Left ventricle myocardium superior (tissue), 1 donor: ENCODE measurements at regions of chr10 and their contacts with region 1.

Region 1: DNA sequence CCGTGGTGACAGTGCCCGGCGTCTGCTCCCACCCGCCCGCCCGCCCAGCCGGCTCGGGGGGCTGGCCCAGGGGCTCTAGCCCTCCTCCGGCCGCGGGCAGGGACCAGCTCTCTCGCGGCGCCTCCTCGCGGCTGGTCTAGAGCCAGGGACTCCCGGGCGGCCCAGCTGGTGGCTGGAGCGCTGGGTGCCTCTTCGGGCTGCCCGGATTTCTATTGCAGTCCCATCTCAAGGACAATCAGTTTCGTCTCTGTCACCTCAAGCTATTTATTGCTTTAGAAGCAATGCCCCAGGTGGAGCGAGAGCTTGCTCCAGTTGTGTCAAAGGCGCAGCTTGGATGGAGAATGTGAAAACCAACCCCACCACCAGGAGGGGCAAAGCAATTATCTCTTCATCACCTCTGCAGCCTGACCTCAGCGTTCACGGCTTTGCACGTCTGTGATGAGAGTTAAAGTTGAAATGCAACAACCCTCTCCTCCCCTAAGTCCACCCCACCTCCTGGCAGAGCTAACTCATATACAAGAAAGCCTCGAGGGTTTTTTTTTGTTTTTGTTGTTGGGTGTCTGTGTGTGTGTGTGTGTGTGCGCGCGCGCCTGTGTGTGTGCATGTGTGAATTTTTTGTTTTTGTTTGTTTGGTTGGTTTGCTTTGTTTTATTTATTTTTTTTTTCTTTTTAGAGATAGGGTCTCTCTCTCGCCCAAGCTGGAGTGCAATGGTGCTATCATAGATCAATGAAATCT is at the start of gene ITGA8:
- DNase-seq: peak; percentile 52
- ATAC-seq: peak; percentile 83
- total RNA-seq, gene ITGA8: 0.82 TPM

Region 2: DNA sequence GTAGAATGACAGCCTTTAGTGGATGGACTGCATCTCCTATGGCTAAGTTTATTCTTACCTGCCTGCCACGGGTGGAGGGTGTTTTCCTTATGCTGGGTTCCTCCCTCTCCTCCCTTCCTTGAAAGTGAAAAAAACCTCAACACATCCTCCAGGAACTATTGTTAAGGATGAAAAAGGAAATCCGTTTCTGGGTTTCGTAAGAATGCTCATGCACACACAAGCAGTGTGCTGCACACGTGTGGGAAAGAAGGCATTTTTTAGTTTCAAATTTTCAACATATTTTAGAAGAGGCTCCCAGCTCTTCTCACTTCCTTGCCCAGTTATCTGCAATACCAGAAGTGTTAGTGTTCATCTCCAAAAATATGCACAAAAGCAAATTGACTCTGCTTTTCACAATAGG is 439.6 kb before region 1 on chr10:
- intact Hi-C with region 1: no loop called
- DNase-seq: no peak
- ATAC-seq: no peak

Region 3: GRCh38 chr10:15433850-15434537 is 286.1 kb before region 1 on chr10:
- intact Hi-C with region 1: loop called (anchors 10 kb)
- DNase-seq: no peak
- ATAC-seq: peak; percentile 79

Region 4: GRCh38 chr10:15585303-15585715 is 134.8 kb before region 1 on chr10:
- intact Hi-C with region 1: loop called (anchors 10 kb)
- DNase-seq: peak; percentile 50
- ATAC-seq: peak; percentile 71

Region 5: DNA sequence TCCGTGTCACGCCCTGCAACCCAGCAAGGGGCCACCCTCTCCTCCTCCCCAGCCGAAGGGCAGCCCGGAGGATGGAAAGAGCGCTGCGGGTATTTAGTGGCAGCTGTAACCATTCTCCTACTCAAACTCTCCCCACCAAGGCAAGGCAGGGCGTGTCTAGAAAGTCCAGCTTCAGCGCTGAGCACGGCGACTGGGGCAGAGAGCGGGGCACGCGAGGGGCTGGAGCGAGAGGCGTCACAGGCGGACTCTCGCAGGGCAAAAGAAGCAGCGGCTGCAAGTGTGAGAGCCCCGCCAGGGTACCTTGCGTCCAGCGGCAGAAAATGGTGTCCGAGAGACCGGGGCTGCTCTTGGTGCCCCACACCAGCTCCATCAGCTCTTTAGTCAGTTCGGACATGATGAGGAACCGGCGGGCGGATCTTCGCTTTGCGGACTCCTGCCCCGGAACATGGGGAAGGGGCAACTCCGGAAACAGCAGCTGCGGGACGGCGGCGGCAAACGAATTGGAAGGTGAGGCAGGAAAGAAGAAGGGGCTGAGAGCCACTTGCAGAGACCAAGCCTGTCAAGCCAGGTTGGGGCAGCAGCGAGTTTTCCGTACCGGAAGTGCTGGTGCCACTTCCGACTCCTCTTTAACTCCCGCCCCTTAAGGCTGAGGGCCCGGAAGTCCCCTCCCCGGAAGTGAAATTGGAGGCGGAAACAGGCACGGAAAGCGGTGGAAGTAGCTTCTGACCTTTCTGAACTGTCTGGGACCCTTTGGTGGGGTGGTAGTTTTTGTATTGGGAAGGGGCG is 140.0 kb after region 1 on chr10 and contains the start of gene MINDY3:
- intact Hi-C with region 1: no loop called
- DNase-seq: peak; percentile 84
- ATAC-seq: peak; percentile 99
- total RNA-seq, gene MINDY3: 18.5 TPM